GM12878 (cell line): ENCODE measurements at regions of chr7 and their contacts with region 1.

Region 1: GRCh38 chr7:20310963-20311742 is 19.5 kb upstream of the ITGB8 start:
- DNase-seq: peak; percentile 61
- ATAC-seq: peak; percentile 64
- H3K4me3 ChIP-seq: no peak overlapping the region
- H3K27ac ChIP-seq: no peak overlapping the region
- H3K4me1 ChIP-seq: peaks cover 4% of the 10 kb centered on the region; the same call in 1 of the 2 replicates
- H3K27me3 ChIP-seq: no peaks in the 10 kb centered on the region
- CTCF ChIP-seq: peak; percentile 16 to 62 (median 39); a peak in 4 of 6 replicates
- EP300 ChIP-seq: no peak
- POLR2A ChIP-seq: no peak
- RAD21 ChIP-seq: peak; percentile 79

Region 2: DNA sequence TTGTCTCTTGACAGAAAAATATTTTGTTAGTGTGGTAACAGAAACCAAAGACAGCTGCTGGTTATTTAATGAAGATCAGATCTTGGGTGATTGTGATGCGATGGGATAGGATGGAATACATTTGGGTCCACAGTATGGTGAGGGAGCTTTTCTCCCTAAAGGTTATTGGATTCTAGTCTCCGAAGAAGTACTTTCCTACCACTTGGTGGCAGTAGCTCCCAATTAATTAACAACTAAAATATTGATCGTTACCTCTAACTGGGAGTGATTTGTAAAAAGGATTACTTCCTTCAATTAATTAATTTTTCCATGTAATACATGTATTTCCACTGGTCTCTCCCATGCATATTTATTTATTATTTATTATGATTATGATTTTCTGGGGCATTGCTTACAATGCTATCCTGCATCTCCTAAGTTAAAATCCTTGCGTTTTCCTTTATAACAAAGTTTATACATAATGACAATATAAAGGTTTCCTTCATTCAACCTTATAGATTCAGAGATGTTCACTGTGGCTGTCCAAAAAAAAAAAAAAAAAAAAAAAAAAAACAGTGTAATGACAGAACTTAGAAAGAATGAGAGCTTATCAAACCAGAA is 563.3 kb before region 1 on chr7:
- CTCF ChIA-PET with region 1: interaction called, 11 read pairs
- POLR2A ChIA-PET with region 1: no interaction called
- RAD21 ChIA-PET with region 1: interaction called, 4 read pairs
- SMC1A ChIA-PET with region 1: interaction called, 3 read pairs
- in situ Hi-C with region 1: loop called (anchors 10 kb)
- intact Hi-C with region 1: loop called (anchors 5 kb)
- DNase-seq: no peak
- ATAC-seq: peak; percentile 76
- H3K4me3 ChIP-seq: no peak overlapping the region
- H3K27ac ChIP-seq: no peak overlapping the region
- H3K4me1 ChIP-seq: no peaks in the 10 kb centered on the region
- H3K27me3 ChIP-seq: no peaks in the 10 kb centered on the region
- CTCF ChIP-seq: peak; percentile 47 to 61 (median 47); a peak in 5 of 6 replicates
- EP300 ChIP-seq: no peak
- POLR2A ChIP-seq: no peak
- RAD21 ChIP-seq: peak; percentile 63

Region 3: DNA sequence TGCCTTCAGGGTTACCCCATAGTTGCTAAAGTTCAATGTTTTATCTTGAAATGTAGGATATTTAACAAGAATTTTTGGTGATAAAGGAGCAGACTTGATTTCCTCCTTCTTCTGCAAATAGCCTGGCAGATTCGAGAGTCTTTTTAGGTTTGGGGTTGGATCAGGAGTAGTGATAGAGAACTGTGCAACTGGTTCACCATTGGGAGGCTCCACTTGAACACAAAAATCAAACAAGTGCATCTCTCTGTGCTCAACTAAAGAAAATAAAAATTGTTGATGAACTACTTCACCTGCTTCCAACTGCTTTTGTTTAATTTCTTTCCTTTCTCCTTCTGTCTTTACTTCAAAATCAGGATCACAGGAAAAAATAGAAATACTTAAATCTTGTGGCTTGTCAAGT is 152.5 kb before region 1 on chr7:
- CTCF ChIA-PET with region 1: interaction called, 35 read pairs
- POLR2A ChIA-PET with region 1: no interaction called
- RAD21 ChIA-PET with region 1: interaction called, 38 read pairs
- SMC1A ChIA-PET with region 1: interaction called, 36 read pairs
- in situ Hi-C with region 1: loop called (anchors 5 kb)
- intact Hi-C with region 1: loop called (anchors 1 kb)
- DNase-seq: no peak
- ATAC-seq: peak; percentile 77
- H3K4me3 ChIP-seq: no peak overlapping the region
- H3K27ac ChIP-seq: no peak overlapping the region
- H3K4me1 ChIP-seq: no peaks in the 10 kb centered on the region
- H3K27me3 ChIP-seq: no peaks in the 10 kb centered on the region
- CTCF ChIP-seq: peak; percentile 43 to 54 (median 48); a peak in 5 of 6 replicates
- EP300 ChIP-seq: no peak
- POLR2A ChIP-seq: no peak
- RAD21 ChIP-seq: peak; percentile 73

Region 4: GRCh38 chr7:20219446-20220292 is 91.5 kb before region 1 on chr7:
- CTCF ChIA-PET with region 1: interaction called, 46 read pairs
- POLR2A ChIA-PET with region 1: interaction called, 9 read pairs
- RAD21 ChIA-PET with region 1: interaction called, 51 read pairs
- SMC1A ChIA-PET with region 1: interaction called, 75 read pairs
- in situ Hi-C with region 1: no loop called
- intact Hi-C with region 1: loop called (anchors 1 kb)
- DNase-seq: peak; percentile 99
- ATAC-seq: peak; percentile 72
- H3K4me3 ChIP-seq: peak overlapping the region; percentile 44; the same call in 1 of the 2 replicates
- H3K27ac ChIP-seq: peak overlapping the region; percentile 98
- H3K4me1 ChIP-seq: peaks cover 35% of the 10 kb centered on the region
- H3K27me3 ChIP-seq: no peaks in the 10 kb centered on the region
- CTCF ChIP-seq: peak in 1 of 3 experiments; percentile 14; a peak in 1 of 6 replicates
- EP300 ChIP-seq: peak; percentile 99 to 100
- POLR2A ChIP-seq: peak; percentile 74
- RAD21 ChIP-seq: peak; percentile 19; the same call in 1 of the 2 replicates

Region 5: GRCh38 chr7:20280475-20281351 is 30.4 kb before region 1 on chr7:
- CTCF ChIA-PET with region 1: interaction called, 6 read pairs
- POLR2A ChIA-PET with region 1: no interaction called
- RAD21 ChIA-PET with region 1: interaction called, 9 read pairs
- SMC1A ChIA-PET with region 1: interaction called, 13 read pairs
- in situ Hi-C with region 1: no loop called
- intact Hi-C with region 1: loop called (anchors 1 kb)
- DNase-seq: no peak
- ATAC-seq: peak; percentile 23
- H3K4me3 ChIP-seq: no peak overlapping the region
- H3K27ac ChIP-seq: no peak overlapping the region
- H3K4me1 ChIP-seq: peaks cover 11% of the 10 kb centered on the region; the same call in 1 of the 2 replicates
- H3K27me3 ChIP-seq: no peaks in the 10 kb centered on the region
- CTCF ChIP-seq: no peak
- EP300 ChIP-seq: no peak
- POLR2A ChIP-seq: no peak
- RAD21 ChIP-seq: no peak

Region 6: DNA sequence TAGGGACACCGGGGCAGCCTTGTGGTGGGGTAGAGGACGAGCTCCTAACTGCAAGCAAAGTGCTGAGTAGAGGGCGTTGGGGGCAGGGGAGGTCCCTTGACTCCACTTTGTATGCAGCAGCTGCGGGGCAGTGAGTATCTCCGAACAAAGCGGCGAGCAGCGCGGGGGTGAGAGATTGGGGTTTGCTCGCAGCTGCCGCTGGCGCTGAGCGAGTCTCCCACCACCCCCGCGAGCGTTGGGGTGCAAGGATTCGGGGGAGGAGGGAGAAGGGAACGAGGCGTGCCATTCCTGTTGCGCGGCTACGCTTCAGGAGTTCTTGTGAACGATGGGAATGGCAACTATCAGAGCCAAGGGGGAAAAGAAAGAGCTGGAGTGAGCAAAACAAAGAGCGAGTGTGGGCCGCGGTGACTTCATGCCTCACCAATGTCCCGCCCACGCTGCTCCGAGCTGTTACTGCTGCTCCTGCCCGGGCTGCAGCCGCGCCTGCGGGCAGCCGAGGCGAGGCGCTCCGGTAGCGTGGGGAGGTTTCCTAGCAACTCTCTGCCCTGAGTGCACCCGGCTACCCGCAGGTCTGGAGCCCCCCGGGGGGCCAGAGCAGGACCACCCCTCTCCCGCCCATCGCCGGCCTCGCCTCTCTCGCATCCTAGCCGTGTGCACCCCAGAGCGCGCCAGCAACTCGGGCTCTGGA is 19.2 kb after region 1 on chr7 and contains the start of gene ITGB8:
- CTCF ChIA-PET with region 1: interaction called, 91 read pairs
- POLR2A ChIA-PET with region 1: interaction called, 14 read pairs
- RAD21 ChIA-PET with region 1: interaction called, 54 read pairs
- SMC1A ChIA-PET with region 1: interaction called, 129 read pairs
- in situ Hi-C with region 1: no loop called
- intact Hi-C with region 1: no loop called
- DNase-seq: no peak
- ATAC-seq: peak; percentile 70
- H3K4me3 ChIP-seq: peak within 1 kb of the TSS; percentile 83
- H3K27ac ChIP-seq: peak within 1 kb of the TSS; percentile 87
- H3K4me1 ChIP-seq: peaks cover 19% of the 10 kb centered on the region
- H3K27me3 ChIP-seq: no peaks in the 10 kb centered on the region; a peak in 1 of 4 replicates
- CTCF ChIP-seq: 0 out of 6 replicates have a peak, but pooled peaks of 1 of the 3 experiments have one; percentile 12
- EP300 ChIP-seq: no peak
- POLR2A ChIP-seq: no peak; the same call in none of the 2 replicates
- RAD21 ChIP-seq: 0 out of 2 replicates have a peak, but pooled peaks have one; percentile 13
- polyA plus RNA-seq, gene ITGB8: 0.37 to 0.40 TPM